GM13976 (cell line): ENCODE measurements at regions of chr18 and their contacts with region 1.

Region 1: DNA sequence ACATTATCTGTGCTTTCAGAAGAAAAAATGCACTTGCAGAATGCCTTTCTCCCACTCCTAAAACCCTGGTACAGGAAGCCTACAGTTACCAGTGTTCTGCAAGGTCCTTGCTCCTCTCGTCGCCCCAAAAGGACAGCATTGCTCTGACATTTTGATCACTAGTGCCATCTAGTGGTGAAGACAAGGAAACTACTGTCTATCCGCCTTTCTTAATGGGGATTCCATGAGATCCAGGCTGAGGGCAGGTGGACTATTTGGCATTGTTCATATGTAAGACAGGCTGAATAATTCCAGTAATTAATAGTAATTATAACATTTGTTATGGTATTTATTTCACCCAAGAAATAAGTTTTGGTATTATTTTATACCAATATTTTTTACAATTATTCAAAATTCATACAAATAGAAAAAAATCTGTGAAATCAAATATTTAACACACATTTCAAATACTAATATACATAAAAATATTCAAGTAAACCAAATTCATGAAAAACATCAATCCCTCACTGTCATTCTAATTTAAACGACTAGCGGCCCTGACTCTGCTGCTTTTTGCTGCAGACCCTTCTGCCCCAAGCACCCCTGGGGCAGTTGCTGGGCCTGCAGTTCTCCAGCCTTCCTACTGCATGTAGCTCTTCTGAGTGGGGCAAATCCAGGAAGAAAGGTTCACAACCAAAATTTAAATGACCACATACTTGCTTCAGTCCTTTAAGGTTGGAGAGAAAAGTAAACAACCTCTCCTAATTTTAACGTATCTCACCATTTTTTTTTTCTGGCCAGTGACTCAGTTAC is 19.0 kb downstream of the TPGS2 start:
- DNase-seq: peak; percentile 73
- CTCF ChIP-seq: peak; percentile 74

Region 2: GRCh38 chr18:36095936-36096519 is 713.8 kb before region 1 on chr18:
- in situ Hi-C with region 1: loop called (anchors 25 kb)
- DNase-seq: peak; percentile 46
- CTCF ChIP-seq: no peak

Region 3: GRCh38 chr18:36931106-36931505 is 121.3 kb after region 1 on chr18:
- in situ Hi-C with region 1: no loop called
- DNase-seq: no peak
- CTCF ChIP-seq: no peak

Region 4: GRCh38 chr18:37179384-37179783 is 369.6 kb after region 1 on chr18:
- in situ Hi-C with region 1: no loop called
- DNase-seq: no peak
- CTCF ChIP-seq: no peak

Region 5: DNA sequence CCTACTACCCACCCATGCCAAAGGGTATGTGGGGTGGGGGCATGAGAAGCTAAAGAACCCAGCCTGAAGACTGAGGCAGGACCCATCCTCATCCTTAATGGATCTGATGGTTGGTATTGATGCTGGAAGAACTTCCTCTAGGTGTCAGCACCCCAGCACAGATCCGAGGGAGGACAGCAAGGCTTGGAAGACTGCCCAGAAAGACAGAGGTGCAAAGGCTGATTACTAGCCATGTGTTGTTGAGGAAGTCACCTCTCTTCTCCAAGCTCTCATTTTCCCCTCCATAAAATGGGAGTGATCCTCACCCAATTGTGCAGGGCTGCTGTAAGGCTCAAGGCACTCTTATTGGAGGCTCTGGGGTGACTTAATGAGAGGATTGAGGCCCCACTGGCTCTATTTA is 499.3 kb after region 1 on chr18:
- in situ Hi-C with region 1: no loop called
- DNase-seq: no peak
- CTCF ChIP-seq: no peak